ENCODE measurements at regions of chr2 and their contacts with region 1.

Region 1: DNA sequence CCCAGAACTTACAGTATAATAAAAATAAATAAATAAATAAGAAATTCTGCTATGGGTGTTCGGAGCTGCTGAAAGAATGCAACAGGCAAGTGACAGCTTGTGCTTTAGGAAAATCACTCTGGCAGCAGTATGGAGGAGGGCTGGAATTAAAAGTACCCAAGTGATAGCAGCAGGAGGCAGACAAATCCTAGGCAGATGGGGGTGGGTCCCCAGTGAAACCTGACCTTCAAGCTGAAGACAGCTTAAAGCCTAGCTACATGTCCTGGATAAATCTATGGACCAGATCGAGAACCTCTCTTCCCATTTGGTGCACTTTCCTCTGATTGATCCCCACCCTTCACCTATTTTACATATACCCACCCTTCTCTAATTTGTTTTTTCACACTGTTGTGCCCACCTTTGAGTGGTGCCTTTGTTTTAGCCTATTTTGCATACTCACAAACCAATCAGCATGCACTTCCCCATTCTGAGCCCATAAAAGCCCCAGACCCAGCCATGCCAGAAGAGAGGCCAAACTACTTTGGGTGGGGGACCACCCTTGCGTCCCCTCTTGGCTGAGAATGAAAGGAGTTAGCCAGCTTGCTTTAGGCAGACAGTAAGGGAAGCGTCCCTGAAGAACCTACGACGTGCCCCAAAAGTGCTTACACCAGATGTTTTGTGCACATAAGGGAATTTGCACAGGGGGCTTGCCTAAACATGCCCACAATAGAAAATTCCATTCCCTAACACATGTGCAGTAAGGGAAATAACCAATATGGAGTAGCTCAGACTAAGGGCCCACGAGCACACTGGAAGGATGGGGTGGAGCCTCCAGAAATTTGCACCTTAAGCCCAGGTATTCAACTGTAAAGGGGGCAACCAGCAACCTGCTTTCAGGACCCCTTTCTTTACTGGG is 3.0 kb downstream of the METTL8 start:
- H3K4me3 ChIP-seq: no peak overlapping the region
- H3K27ac ChIP-seq: no peak overlapping the region
- H3K4me1 ChIP-seq: no peaks in the 10 kb centered on the region
- CTCF ChIP-seq: no peak

Region 2: GRCh38 chr2:171416009-171416926 is 14.5 kb before region 1 on chr2:
- CTCF ChIA-PET with region 1: interaction called, 29 read pairs
- POLR2A ChIA-PET with region 1: interaction called, 4 read pairs
- H3K4me3 ChIP-seq: no peak overlapping the region
- H3K27ac ChIP-seq: no peak overlapping the region
- H3K4me1 ChIP-seq: no peaks in the 10 kb centered on the region
- CTCF ChIP-seq: peak; percentile 77

Region 3: DNA sequence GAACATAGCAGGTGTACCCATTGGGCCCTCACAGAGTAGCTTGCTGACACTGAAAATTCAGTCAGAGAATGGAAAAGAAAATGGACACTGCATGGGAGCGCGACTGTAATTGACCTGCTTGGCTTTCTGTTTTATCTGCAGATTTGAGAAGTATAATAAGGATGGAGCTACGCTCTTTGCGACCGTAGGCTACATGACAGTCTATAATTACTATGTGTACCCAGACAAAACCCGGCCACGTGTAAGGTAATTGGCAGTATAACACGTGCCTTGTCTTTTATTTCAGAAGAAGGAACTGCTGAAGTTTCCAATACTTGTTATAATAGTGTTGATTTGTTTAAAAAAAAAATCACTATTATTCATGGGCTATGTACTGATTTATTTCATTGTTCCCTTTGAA is 535.5 kb after region 1 on chr2:
- CTCF ChIA-PET with region 1: no interaction called
- POLR2A ChIA-PET with region 1: no interaction called
- H3K4me3 ChIP-seq: no peak overlapping the region
- H3K27ac ChIP-seq: no peak overlapping the region
- H3K4me1 ChIP-seq: peaks cover 10% of the 10 kb centered on the region
- CTCF ChIP-seq: no peak

Measured in HEK293 (cell line).